ENCODE measurements at regions of chr19 and their contacts with region 1.

Region 1: DNA sequence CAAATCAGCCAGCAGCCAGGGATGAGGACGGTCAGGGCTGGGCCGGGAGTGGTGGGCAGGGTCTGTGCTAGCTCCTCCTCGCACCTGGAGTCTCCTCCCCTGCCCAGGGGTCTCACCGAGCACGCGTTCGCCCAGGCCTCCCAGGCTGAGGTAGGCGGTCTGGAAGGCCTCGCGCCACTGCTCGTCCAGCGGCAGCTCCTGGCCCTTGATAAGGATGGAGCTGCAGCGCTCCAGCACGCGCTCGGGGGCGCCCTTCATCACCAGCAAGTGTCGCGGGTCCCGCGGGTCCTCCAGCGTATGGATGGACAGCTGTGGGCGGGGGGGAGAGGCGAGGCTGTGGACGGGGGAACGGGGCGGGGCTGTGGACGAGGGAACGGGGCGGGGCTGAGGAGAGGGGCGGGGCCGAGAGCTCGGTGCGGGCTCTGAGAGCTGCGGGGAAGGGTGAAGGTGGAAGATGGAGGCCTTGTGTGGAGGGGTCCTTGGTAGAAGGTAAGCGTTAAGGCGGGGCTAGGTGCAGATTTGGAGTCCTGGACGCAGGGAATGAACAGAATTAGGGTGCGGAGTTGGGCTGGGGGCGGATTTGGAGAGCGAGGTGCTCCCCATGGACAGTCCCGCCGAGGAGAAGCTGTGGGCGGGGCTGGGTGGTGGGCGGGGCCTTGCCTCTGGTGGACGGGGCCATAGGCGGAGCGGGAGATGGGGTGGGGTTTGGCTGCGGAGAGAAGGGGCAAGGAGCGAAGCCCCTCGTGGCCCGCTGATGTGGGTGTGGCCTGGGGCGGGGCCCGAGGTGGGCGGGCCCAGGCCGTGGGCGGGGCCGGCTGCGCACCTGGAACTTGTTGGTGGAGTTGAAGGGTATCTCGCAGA is 5.7 kb downstream of the ATP4A start:
- DNase-seq: peak; percentile 77
- ATAC-seq: peak; percentile 59

Region 2: GRCh38 chr19:35484252-35485036 is 73.3 kb before region 1 on chr19:
- intact Hi-C with region 1: no loop called
- DNase-seq: no peak
- ATAC-seq: no peak

Region 3: GRCh38 chr19:36745870-36746269 is 1188.1 kb after region 1 on chr19:
- intact Hi-C with region 1: loop called (anchors 10 kb)
- DNase-seq: no peak
- ATAC-seq: no peak

Region 4: DNA sequence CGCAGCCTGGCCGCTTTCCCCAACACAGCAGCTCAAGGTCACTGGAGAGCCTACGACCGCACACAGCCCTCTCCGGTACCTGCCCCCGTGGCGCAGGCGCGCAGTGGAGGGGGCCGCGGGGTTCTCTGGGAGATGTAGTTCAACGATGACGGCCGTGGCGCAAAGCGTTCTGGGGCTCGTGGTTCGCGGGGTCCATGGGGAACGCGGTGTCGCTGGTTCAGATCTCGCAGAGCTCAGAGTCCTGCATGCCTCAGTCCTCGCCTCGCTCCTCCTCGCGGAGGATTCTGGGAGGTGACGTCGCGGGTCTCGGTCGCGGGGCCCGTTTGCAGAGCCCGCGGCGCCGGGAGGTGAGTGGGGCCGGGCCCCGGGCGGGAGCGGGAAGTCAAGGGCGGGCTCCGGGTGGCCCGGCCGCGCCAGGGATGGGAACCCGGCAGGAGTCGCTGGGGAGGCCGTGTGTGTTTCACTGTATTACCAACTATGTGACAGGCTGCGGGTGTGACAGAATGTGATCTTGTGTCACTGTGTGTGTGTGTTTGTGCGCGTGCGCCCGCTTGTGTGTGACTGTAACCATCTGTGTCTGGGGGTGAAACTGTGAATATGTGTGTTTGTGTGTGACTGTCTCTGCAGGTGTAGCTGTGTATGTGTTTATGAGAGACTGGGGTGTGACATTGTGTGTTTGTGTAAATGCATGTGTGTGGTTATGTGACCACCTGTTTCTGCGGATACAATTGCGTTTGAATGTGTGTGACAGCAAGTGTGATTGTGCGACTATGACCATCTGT is 1813.3 kb after region 1 on chr19 and contains the start of gene ZNF527:
- intact Hi-C with region 1: no loop called
- DNase-seq: peak; percentile 97
- ATAC-seq: peak; percentile 100
- total RNA-seq, gene ZNF527: 9.3 TPM